CD14-positive monocyte (primary cell): ENCODE measurements at regions of chr1 and their contacts with region 1.

Region 1: GRCh38 chr1:32939655-32940371 is 24.8 kb downstream of the RNF19B start:
- DNase-seq: peak; percentile 45 to 83 (median 79)
- H3K4me3 ChIP-seq: peak overlapping the region in 1 of 3 experiments; percentile 26
- H3K4me3 Mint-ChIP-seq: peak overlapping the region in 1 of 2 donors; percentile 65
- H3K27ac ChIP-seq: peak overlapping the region; percentile 41 to 74
- H3K27ac Mint-ChIP-seq: peak overlapping the region; percentile 81 to 97 (median 87)
- H3K4me1 ChIP-seq: peaks cover 34 to 35% of the 10 kb centered on the region in 2 donors
- H3K4me1 Mint-ChIP-seq: peaks cover 38% of the 10 kb centered on the region
- H3K27me3 ChIP-seq: no peaks in the 10 kb centered on the region
- H3K27me3 Mint-ChIP-seq: peaks cover 0 to 3% (median 0%) of the 10 kb centered on the region in 3 donors
- CTCF ChIP-seq: no peak

Region 2: GRCh38 chr1:33080885-33081553 is 141.2 kb after region 1 on chr1 and contains the start of gene AZIN2:
- intact Hi-C with region 1: loop called in 1 of 2 experiments (anchors 10 kb)
- DNase-seq: peak; percentile 83 to 91 (median 87)
- H3K4me3 ChIP-seq: peak within 1 kb of the TSS; percentile 33 to 80 (median 60)
- H3K4me3 Mint-ChIP-seq: peak within 1 kb of the TSS; percentile 76 to 86
- H3K27ac ChIP-seq: no peak within 1 kb of the TSS
- H3K27ac Mint-ChIP-seq: peak within 1 kb of the TSS in 3 of 7 donors; percentile 21 to 84 (median 38)
- H3K4me1 ChIP-seq: peaks cover 18 to 24% of the 10 kb centered on the region in 2 donors
- H3K4me1 Mint-ChIP-seq: peaks cover 24% of the 10 kb centered on the region
- H3K27me3 ChIP-seq: peaks cover 18 to 38% of the 10 kb centered on the region in 2 donors
- H3K27me3 Mint-ChIP-seq: peaks cover 33 to 48% (median 35%) of the 10 kb centered on the region in 3 donors
- CTCF ChIP-seq: no peak
- polyA plus RNA-seq, gene AZIN2: 0.03 to 0.89 TPM in 2 of 3 donors, not detected in the other